Panc1 (cell line): ENCODE measurements at regions of chr16 and their contacts with region 1.

Region 1: DNA sequence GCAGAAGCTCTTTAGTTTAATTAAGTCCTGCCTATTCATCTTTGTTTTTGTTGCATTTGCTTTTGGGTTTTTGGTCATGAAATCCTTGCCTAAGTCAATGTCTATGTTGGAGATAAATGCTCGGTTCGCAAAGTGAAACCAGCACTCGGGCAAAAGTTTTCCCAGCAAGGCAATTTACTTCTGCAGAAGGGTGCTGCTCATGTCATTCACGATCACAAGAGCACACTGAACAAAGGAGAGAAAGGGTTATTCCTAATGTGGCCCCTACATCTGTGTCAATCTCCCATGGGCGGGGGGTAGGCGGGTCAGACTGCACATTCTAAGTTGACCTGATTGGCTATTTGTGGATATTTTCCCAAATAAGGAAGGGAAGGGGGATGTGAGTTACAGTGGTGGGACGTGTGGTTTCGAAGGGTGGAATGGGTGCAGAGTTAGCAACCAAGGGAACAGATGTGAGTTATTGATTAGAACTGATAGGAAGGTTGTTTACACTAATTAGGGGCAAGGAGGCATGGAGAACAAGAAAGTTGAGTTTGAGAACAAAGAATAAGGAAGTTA is 23.0 kb downstream of the ATF7IP2 start:
- DNase-seq: no peak
- ATAC-seq: no peak
- H3K4me3 ChIP-seq: no peak overlapping the region
- H3K27ac ChIP-seq: no peak overlapping the region
- H3K4me1 ChIP-seq: no peaks in the 10 kb centered on the region
- H3K27me3 ChIP-seq: no peaks in the 10 kb centered on the region
- CTCF ChIP-seq: no peak

Region 2: DNA sequence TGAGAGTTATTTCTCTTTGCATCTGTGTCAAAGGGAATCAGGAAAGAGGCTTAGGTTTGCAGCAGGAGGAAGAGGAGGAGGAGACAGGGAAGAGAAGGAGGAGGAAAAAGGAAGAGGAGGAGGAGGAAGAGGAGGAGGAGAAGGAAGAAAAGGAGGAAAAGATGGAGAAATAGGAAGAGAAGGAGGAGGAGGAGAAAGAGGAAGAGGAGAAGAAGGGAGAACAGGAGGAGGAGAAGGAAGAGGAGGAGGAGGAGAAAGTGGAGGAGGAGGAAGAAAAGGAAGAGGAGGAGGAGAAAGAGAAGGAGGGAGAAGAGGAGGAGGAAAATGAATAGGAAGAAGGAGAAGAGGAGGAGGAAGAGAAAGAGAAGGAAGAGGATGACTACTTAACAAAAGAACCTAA is 685.8 kb before region 1 on chr16:
- CTCF ChIA-PET with region 1: no interaction called
- POLR2A ChIA-PET with region 1: interaction called, 10 read pairs
- in situ Hi-C with region 1: no loop called
- intact Hi-C with region 1: no loop called
- DNase-seq: no peak
- ATAC-seq: no peak
- H3K4me3 ChIP-seq: no peak overlapping the region
- H3K27ac ChIP-seq: no peak overlapping the region
- H3K4me1 ChIP-seq: no peaks in the 10 kb centered on the region
- H3K27me3 ChIP-seq: no peaks in the 10 kb centered on the region
- CTCF ChIP-seq: no peak

Region 3: GRCh38 chr16:10428433-10429168 is 19.7 kb after region 1 on chr16:
- CTCF ChIA-PET with region 1: interaction called, 3 read pairs
- POLR2A ChIA-PET with region 1: interaction called, 12 read pairs
- in situ Hi-C with region 1: no loop called
- intact Hi-C with region 1: no loop called
- DNase-seq: no peak
- ATAC-seq: no peak
- H3K4me3 ChIP-seq: no peak overlapping the region
- H3K27ac ChIP-seq: no peak overlapping the region
- H3K4me1 ChIP-seq: no peaks in the 10 kb centered on the region
- H3K27me3 ChIP-seq: no peaks in the 10 kb centered on the region
- CTCF ChIP-seq: no peak

Region 4: GRCh38 chr16:10447289-10447688 is 38.4 kb after region 1 on chr16:
- CTCF ChIA-PET with region 1: no interaction called
- POLR2A ChIA-PET with region 1: interaction called, 12 read pairs
- in situ Hi-C with region 1: no loop called
- intact Hi-C with region 1: no loop called
- DNase-seq: no peak
- ATAC-seq: no peak
- H3K4me3 ChIP-seq: no peak overlapping the region
- H3K27ac ChIP-seq: no peak overlapping the region
- H3K4me1 ChIP-seq: no peaks in the 10 kb centered on the region
- H3K27me3 ChIP-seq: no peaks in the 10 kb centered on the region
- CTCF ChIP-seq: no peak